GM10248 (cell line): ENCODE measurements at regions of chr17 and their contacts with region 1.

Region 1: GRCh38 chr17:75855310-75856081 is at the start of gene WBP2:
- DNase-seq: peak; percentile 97
- CTCF ChIP-seq: peak; percentile 53

Region 2: DNA sequence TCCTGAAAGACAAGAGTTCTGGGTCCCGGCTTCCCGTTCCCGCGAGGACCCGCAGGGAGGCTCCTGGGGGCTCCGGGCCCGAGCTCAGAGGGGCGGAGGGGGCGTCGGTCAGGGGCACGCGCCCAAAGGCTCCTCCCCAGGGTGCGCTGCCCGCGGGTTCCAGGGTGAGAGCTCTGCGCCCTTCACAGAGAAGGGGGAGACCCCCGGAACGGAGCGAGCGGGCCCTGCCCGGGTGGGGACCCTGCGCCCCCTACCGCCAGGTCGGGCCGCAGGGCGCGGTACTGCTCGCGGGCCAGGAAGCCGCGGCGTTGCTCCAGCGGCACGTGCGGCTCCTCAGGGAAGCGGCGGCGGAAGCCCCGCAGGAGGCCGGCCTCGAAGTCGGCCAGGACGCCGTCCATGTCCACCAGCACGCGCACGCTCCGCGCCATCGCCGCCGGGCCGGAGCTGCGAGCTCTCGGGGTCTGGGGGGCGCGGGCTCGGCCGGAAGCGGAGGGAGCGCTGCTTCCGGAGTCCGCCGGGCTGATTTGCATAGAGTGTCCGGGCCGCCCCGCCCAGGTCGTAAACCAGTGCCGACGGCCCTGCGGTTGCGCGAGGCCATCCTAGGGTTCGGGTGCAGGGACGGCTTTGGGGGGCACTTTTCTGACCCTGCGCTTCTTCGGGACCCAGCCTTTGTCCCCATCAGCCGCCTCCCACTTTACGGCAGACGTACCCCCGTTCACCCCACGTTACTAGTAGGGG is 724.0 kb before region 1 on chr17 and contains the start of gene NT5C:
- CTCF ChIA-PET with region 1: no interaction called
- POLR2A ChIA-PET with region 1: interaction called, 11 read pairs
- DNase-seq: peak; percentile 92
- CTCF ChIP-seq: peak; percentile 73

Region 3: GRCh38 chr17:75779231-75779986 is 76.1 kb before region 1 on chr17:
- CTCF ChIA-PET with region 1: interaction called, 6 read pairs
- POLR2A ChIA-PET with region 1: interaction called, 22 read pairs
- DNase-seq: peak; percentile 94
- CTCF ChIP-seq: no peak

Region 4: GRCh38 chr17:75845049-75845860 is 10.2 kb before region 1 on chr17:
- CTCF ChIA-PET with region 1: interaction called, 44 read pairs
- POLR2A ChIA-PET with region 1: interaction called, 18 read pairs
- DNase-seq: peak; percentile 91
- CTCF ChIP-seq: peak; percentile 69

Region 5: GRCh38 chr17:75872434-75873351 is 17.2 kb after region 1 on chr17:
- CTCF ChIA-PET with region 1: interaction called, 89 read pairs
- POLR2A ChIA-PET with region 1: interaction called, 4 read pairs
- DNase-seq: no peak
- CTCF ChIP-seq: no peak

Region 6: GRCh38 chr17:75877752-75878173 is 22.3 kb after region 1 on chr17:
- CTCF ChIA-PET with region 1: interaction called, 89 read pairs
- POLR2A ChIA-PET with region 1: interaction called, 4 read pairs
- DNase-seq: peak; percentile 73
- CTCF ChIP-seq: peak; percentile 56